A549 (cell line): ENCODE measurements at regions of chr16 and their contacts with region 1.

Region 1: DNA sequence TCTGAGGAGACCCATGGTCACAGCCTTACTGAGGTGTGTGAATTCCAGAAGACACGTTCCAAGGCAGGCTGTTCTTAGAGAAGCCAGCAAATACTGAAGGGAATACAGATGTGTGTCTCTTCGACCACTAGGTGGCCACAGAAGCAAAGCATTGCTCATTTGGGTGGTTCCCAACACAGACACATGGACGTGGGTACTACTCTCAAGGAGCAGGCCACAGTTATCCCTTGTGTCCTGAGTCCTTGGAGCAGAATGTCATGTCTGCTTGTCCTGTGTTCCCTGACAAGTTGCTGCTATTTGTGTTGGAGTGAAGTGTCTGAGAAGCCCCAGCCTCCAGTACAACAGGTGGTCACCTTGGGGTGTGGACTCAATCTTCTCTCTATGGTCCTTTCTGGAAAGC is 30.3 kb downstream of the HMOX2 start:
- DNase-seq: peak; percentile 62 to 77
- ATAC-seq: peak; percentile 89 to 95
- H3K4me3 ChIP-seq: no peak overlapping the region
- H3K27ac ChIP-seq: no peak overlapping the region
- H3K4me1 ChIP-seq: peaks cover 4% of the 10 kb centered on the region
- CTCF ChIP-seq: peak; percentile 88
- EP300 ChIP-seq: no peak
- POLR2A ChIP-seq: no peak
- RAD21 ChIP-seq: peak; percentile 76 to 82

Region 2: DNA sequence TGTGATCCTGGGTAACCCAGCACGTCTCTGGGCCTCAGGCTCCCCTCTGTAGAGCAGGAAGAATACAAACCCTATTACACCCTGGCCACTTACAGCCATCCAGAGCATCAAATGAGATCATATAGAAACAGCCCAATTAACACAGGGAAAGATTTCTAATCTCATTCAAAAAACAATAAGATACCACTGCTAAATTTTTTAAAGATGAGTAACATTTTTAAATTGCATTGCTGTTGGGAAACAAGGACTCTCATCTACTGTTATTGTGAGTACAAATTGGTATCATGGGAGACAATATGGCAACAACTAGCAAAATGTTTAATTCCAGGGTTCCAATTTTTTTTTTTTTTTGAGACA is 305.7 kb before region 1 on chr16:
- CTCF ChIA-PET with region 1: no interaction called
- POLR2A ChIA-PET with region 1: no interaction called
- DNase-seq: no peak
- ATAC-seq: peak; percentile 22 to 48; a peak in 4 of 6 replicates
- H3K4me3 ChIP-seq: no peak overlapping the region
- H3K27ac ChIP-seq: peak overlapping the region in 1 of 2 experiments; percentile 65; a peak in 2 of 6 replicates
- H3K4me1 ChIP-seq: peaks cover 7% of the 10 kb centered on the region; the same call in 2 of the 3 replicates
- CTCF ChIP-seq: no peak
- EP300 ChIP-seq: no peak
- POLR2A ChIP-seq: no peak
- RAD21 ChIP-seq: no peak

Region 3: GRCh38 chr16:4474191-4474961 is 32.1 kb before region 1 on chr16 and contains the start of gene NMRAL1:
- CTCF ChIA-PET with region 1: interaction called, 12 read pairs
- POLR2A ChIA-PET with region 1: interaction called, 5 read pairs
- DNase-seq: peak; percentile 88 to 94
- ATAC-seq: peak; percentile 73 to 83
- H3K4me3 ChIP-seq: peak within 1 kb of the TSS; percentile 72
- H3K27ac ChIP-seq: peak within 1 kb of the TSS; percentile 87 to 93
- H3K4me1 ChIP-seq: peaks cover 27% of the 10 kb centered on the region
- CTCF ChIP-seq: no peak
- EP300 ChIP-seq: no peak
- POLR2A ChIP-seq: peak; percentile 70
- RAD21 ChIP-seq: no peak
- polyA plus RNA-seq, gene NMRAL1: 36.3 and 36.4 TPM in 2 replicates

Region 4: GRCh38 chr16:4494746-4495490 is 11.5 kb before region 1 on chr16:
- CTCF ChIA-PET with region 1: interaction called, 32 read pairs
- POLR2A ChIA-PET with region 1: no interaction called
- DNase-seq: peak in 1 of 2 experiments; percentile 62
- ATAC-seq: peak; percentile 63 to 84; a peak in 5 of 6 replicates
- H3K4me3 ChIP-seq: no peak overlapping the region
- H3K27ac ChIP-seq: peak overlapping the region in 1 of 2 experiments; percentile 68; a peak in 4 of 6 replicates
- H3K4me1 ChIP-seq: peaks cover 26% of the 10 kb centered on the region
- CTCF ChIP-seq: no peak
- EP300 ChIP-seq: no peak
- POLR2A ChIP-seq: no peak
- RAD21 ChIP-seq: no peak

Region 5: DNA sequence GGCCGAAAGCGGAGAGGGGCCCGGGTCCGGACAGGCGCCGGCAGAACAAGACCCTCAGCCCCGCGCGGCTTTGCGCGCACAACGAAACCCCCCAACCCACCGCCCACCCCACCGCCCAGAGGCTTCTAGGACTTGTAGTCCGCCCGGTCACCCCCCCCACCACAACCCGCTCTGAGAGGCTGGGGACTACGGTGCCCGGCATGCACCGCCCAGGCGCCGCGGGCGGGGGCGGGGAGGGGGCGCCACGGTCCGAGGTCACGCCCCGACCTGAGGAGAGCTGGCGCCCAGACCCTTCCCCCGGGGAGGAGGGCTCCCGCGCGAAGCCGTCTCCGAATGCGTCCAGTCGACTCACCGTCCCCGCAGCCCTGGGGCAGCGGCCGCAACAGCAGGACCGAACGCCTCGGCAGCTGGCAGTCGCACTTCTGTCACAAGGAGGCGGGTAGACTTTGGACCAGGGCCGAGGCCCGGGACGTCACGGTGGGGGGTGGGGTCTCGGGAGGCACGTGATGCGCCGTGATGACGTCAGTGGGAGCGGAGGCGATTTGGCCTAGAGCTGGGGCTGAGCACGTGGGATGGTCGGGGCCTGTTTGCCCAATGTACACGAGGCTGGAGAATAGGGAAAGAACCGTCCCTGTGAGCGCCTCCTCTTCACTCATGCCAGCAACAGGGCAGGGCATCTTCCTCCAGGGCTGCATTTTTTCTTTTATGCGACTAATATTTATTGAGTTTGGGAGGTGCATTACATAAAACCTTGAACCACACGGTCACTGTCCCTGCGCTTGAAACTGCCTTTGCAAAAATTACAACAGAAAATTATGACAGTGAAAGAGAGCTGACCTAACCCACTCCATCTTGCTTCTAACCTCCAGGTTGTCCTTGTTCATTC is 32.1 kb after region 1 on chr16 and contains the start of gene CDIP1:
- CTCF ChIA-PET with region 1: interaction called, 301 read pairs
- POLR2A ChIA-PET with region 1: no interaction called
- DNase-seq: peak; percentile 88 to 96
- ATAC-seq: peak; percentile 85 to 87
- H3K4me3 ChIP-seq: peak within 1 kb of the TSS; percentile 51
- H3K27ac ChIP-seq: peak within 1 kb of the TSS; percentile 48 to 91
- H3K4me1 ChIP-seq: peaks cover 5% of the 10 kb centered on the region; the same call in 1 of the 3 replicates
- CTCF ChIP-seq: no peak
- EP300 ChIP-seq: no peak
- POLR2A ChIP-seq: peak; percentile 31; the same call in 1 of the 2 replicates
- RAD21 ChIP-seq: no peak
- polyA plus RNA-seq, gene CDIP1: 3.7 and 4.4 TPM in 2 replicates

Region 6: GRCh38 chr16:4616047-4616811 is 109.8 kb after region 1 on chr16:
- CTCF ChIA-PET with region 1: interaction called, 13 read pairs
- POLR2A ChIA-PET with region 1: no interaction called
- DNase-seq: peak; percentile 98 to 100
- ATAC-seq: peak; percentile 74 to 83
- H3K4me3 ChIP-seq: peak overlapping the region; percentile 56
- H3K27ac ChIP-seq: peak overlapping the region; percentile 93 to 98
- H3K4me1 ChIP-seq: peaks cover 42% of the 10 kb centered on the region
- CTCF ChIP-seq: peak; percentile 41
- EP300 ChIP-seq: no peak
- POLR2A ChIP-seq: peak; percentile 72
- RAD21 ChIP-seq: peak in 1 of 2 experiments; percentile 21; a peak in 2 of 5 replicates